GM12878 (cell line): ENCODE measurements at regions of chr3 and their contacts with region 1.

Region 1: GRCh38 chr3:115960799-115961198 is 337.5 kb downstream of the GAP43 start:
- DNase-seq: no peak
- ATAC-seq: peak; percentile 86
- H3K4me3 ChIP-seq: no peak overlapping the region
- H3K27ac ChIP-seq: no peak overlapping the region
- H3K4me1 ChIP-seq: no peaks in the 10 kb centered on the region; the same call in 1 of the 2 replicates
- H3K27me3 ChIP-seq: no peaks in the 10 kb centered on the region
- CTCF ChIP-seq: no peak
- EP300 ChIP-seq: 0 out of 4 replicates have a peak, but pooled peaks of 1 of the 2 experiments have one; percentile 17
- POLR2A ChIP-seq: no peak
- RAD21 ChIP-seq: no peak

Region 2: GRCh38 chr3:115293321-115293720 is 667.5 kb before region 1 on chr3:
- CTCF ChIA-PET with region 1: no interaction called
- POLR2A ChIA-PET with region 1: no interaction called
- RAD21 ChIA-PET with region 1: no interaction called
- SMC1A ChIA-PET with region 1: no interaction called
- in situ Hi-C with region 1: no loop called
- intact Hi-C with region 1: no loop called
- DNase-seq: no peak
- ATAC-seq: no peak
- H3K4me3 ChIP-seq: no peak overlapping the region
- H3K27ac ChIP-seq: no peak overlapping the region
- H3K4me1 ChIP-seq: no peaks in the 10 kb centered on the region
- H3K27me3 ChIP-seq: no peaks in the 10 kb centered on the region
- CTCF ChIP-seq: no peak
- EP300 ChIP-seq: no peak
- POLR2A ChIP-seq: no peak
- RAD21 ChIP-seq: no peak

Region 3: DNA sequence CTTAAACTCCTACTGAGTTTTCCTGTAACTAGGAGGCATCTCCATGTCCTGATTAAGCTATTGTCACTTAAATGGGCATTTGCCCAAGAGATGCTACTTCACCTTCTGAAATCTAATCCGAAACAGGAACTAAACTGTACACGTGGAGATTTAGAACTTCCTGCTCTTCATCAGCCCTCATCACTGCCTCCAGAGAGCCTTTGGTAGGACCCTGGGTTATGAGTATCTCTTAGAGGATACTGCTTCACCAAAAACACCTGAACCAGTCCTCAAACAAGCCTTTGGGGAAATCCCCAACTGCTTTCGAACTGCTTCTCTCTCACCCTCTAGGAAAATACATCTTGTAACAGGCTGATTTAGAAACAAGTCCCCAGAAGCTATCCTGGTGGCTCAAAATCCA is 17.2 kb before region 1 on chr3:
- CTCF ChIA-PET with region 1: interaction called, 3 read pairs
- POLR2A ChIA-PET with region 1: no interaction called
- RAD21 ChIA-PET with region 1: interaction called, 3 read pairs
- SMC1A ChIA-PET with region 1: interaction called, 15 read pairs
- in situ Hi-C with region 1: no loop called
- intact Hi-C with region 1: no loop called
- DNase-seq: no peak
- ATAC-seq: peak; percentile 73
- H3K4me3 ChIP-seq: no peak overlapping the region
- H3K27ac ChIP-seq: no peak overlapping the region
- H3K4me1 ChIP-seq: no peaks in the 10 kb centered on the region; the same call in 1 of the 2 replicates
- H3K27me3 ChIP-seq: no peaks in the 10 kb centered on the region
- CTCF ChIP-seq: no peak
- EP300 ChIP-seq: no peak
- POLR2A ChIP-seq: no peak
- RAD21 ChIP-seq: no peak

Region 4: DNA sequence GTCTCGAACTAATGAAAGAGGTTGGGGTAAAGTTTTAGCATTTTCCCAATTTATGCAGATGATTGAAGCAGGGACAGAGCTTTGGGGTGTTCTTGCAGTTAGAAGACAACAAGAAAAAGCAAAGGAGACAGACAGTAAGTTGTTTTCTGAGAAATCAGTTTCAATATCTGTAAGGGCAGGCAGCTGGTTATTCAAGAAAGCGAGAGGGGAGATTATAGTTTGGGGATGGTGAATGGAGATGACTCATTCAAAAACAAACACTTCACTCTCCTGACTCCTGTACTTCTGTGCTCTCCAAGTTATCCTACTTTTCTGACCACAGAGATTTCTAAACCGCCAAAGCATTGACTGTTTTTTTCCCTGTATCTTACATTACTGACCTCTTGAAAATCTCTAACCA is 14.6 kb after region 1 on chr3:
- CTCF ChIA-PET with region 1: no interaction called
- POLR2A ChIA-PET with region 1: no interaction called
- RAD21 ChIA-PET with region 1: interaction called, 4 read pairs
- SMC1A ChIA-PET with region 1: interaction called, 12 read pairs
- in situ Hi-C with region 1: no loop called
- intact Hi-C with region 1: no loop called
- DNase-seq: no peak
- ATAC-seq: peak; percentile 74
- H3K4me3 ChIP-seq: no peak overlapping the region
- H3K27ac ChIP-seq: no peak overlapping the region
- H3K4me1 ChIP-seq: no peaks in the 10 kb centered on the region
- H3K27me3 ChIP-seq: no peaks in the 10 kb centered on the region
- CTCF ChIP-seq: no peak
- EP300 ChIP-seq: no peak
- POLR2A ChIP-seq: no peak
- RAD21 ChIP-seq: no peak

Region 5: DNA sequence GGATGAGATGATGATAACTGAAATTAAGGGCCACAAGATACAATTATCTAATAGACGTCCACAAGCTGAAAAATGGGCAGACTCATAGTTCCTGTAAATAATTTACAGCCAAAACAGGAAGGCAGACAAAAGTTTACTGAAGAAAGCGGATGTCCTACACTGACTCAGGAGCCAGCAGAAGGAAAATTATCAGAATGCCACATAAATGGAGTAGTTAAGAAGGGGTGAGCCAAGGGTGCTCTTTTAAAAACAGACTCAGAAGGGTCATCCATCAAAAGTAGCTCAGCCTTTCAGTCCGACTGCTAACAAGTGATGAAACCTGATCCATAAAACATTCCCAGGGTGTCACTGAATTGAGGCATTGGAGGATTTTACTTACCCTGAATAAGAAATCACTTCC is 788.6 kb after region 1 on chr3:
- CTCF ChIA-PET with region 1: no interaction called
- POLR2A ChIA-PET with region 1: no interaction called
- RAD21 ChIA-PET with region 1: no interaction called
- SMC1A ChIA-PET with region 1: no interaction called
- in situ Hi-C with region 1: no loop called
- intact Hi-C with region 1: no loop called
- DNase-seq: no peak
- ATAC-seq: no peak
- H3K4me3 ChIP-seq: no peak overlapping the region
- H3K27ac ChIP-seq: no peak overlapping the region
- H3K4me1 ChIP-seq: no peaks in the 10 kb centered on the region
- H3K27me3 ChIP-seq: no peaks in the 10 kb centered on the region
- CTCF ChIP-seq: no peak
- EP300 ChIP-seq: no peak
- POLR2A ChIP-seq: no peak
- RAD21 ChIP-seq: no peak